T-cell (primary cell): ENCODE measurements at regions of chr9 and their contacts with region 1.

Region 1: GRCh38 chr9:89428901-89429890 is 68.7 kb downstream of the SEMA4D start:
- DNase-seq: peak in 34 of 35 experiments; percentile 40 to 83 (median 70)
- ATAC-seq: peak; percentile 48 to 78 (median 53)
- H3K4me3 ChIP-seq: no peak overlapping the region
- H3K4me3 Mint-ChIP-seq: peak overlapping the region in 2 of 3 donors; percentile 34 to 70
- H3K27ac ChIP-seq: peak overlapping the region; percentile 27
- H3K27ac Mint-ChIP-seq: peak overlapping the region; percentile 89 to 94
- H3K4me1 ChIP-seq: peaks cover 27 to 100% of the 10 kb centered on the region in 2 experiments
- H3K4me1 Mint-ChIP-seq: peaks cover 95 to 100% (median 98%) of the 10 kb centered on the region in 3 donors
- H3K27me3 ChIP-seq: no peaks in the 10 kb centered on the region
- H3K27me3 Mint-ChIP-seq: no peaks in the 10 kb centered on the region

Region 2: DNA sequence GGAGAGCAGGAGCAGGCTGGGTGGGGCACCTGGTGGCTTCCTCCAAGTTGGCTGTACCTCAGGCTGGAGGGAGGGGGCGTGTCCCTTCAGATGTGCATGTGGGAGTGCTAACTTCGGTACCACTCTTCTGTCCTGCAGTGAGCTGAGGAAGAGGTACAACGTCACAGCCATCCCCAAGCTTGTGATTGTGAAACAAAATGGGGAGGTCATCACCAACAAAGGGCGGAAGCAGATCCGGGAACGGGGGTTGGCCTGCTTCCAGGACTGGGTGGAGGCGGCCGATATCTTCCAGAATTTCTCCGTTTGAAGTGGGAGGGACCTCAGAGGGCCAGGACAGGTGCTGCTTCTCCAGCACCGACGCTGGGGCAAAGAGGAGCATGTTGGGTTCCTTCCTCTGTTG is 885.0 kb before region 1 on chr9:
- CTCF ChIA-PET with region 1: no interaction called
- POLR2A ChIA-PET with region 1: no interaction called
- DNase-seq: no peak
- ATAC-seq: no peak
- H3K4me3 ChIP-seq: no peak overlapping the region
- H3K4me3 Mint-ChIP-seq: no peak overlapping the region
- H3K27ac ChIP-seq: no peak overlapping the region
- H3K27ac Mint-ChIP-seq: no peak overlapping the region
- H3K4me1 ChIP-seq: no peaks in the 10 kb centered on the region
- H3K4me1 Mint-ChIP-seq: no peaks in the 10 kb centered on the region
- H3K27me3 ChIP-seq: peaks cover 0 to 23% of the 10 kb centered on the region in 2 experiments
- H3K27me3 Mint-ChIP-seq: peaks cover 33 to 34% of the 10 kb centered on the region in 2 donors

Region 3: GRCh38 chr9:89455356-89455824 is 26.2 kb after region 1 on chr9:
- CTCF ChIA-PET with region 1: interaction called in 1 of 2 experiments, 10 read pairs
- POLR2A ChIA-PET with region 1: interaction called in 1 of 2 experiments, 4 read pairs
- DNase-seq: peak in 34 of 35 experiments; percentile 27 to 72 (median 53)
- ATAC-seq: peak; percentile 62 to 71 (median 66)
- H3K4me3 ChIP-seq: peak overlapping the region; percentile 2 to 8
- H3K4me3 Mint-ChIP-seq: peak overlapping the region; percentile 32 to 72 (median 69)
- H3K27ac ChIP-seq: peak overlapping the region; percentile 81
- H3K27ac Mint-ChIP-seq: peak overlapping the region; percentile 96 to 97
- H3K4me1 ChIP-seq: peaks cover 63 to 89% of the 10 kb centered on the region in 2 experiments
- H3K4me1 Mint-ChIP-seq: peaks cover 96 to 97% (median 97%) of the 10 kb centered on the region in 3 donors
- H3K27me3 ChIP-seq: no peaks in the 10 kb centered on the region
- H3K27me3 Mint-ChIP-seq: no peaks in the 10 kb centered on the region

Region 4: GRCh38 chr9:89489548-89490530 is 60.6 kb after region 1 on chr9:
- CTCF ChIA-PET with region 1: interaction called, 3 to 11 read pairs
- POLR2A ChIA-PET with region 1: no interaction called
- DNase-seq: peak in 10 of 35 experiments; percentile 28 to 88 (median 54)
- ATAC-seq: peak; percentile 78 to 91 (median 82)
- H3K4me3 ChIP-seq: peak overlapping the region in 1 of 2 donors; percentile 21
- H3K4me3 Mint-ChIP-seq: peak overlapping the region; percentile 67 to 96 (median 93)
- H3K27ac ChIP-seq: peak overlapping the region; percentile 76
- H3K27ac Mint-ChIP-seq: peak overlapping the region; percentile 90 to 95
- H3K4me1 ChIP-seq: peaks cover 74 to 79% of the 10 kb centered on the region in 2 experiments
- H3K4me1 Mint-ChIP-seq: peaks cover 97 to 98% (median 98%) of the 10 kb centered on the region in 3 donors
- H3K27me3 ChIP-seq: no peaks in the 10 kb centered on the region
- H3K27me3 Mint-ChIP-seq: no peaks in the 10 kb centered on the region